PC-9 (cell line): ENCODE measurements at regions of chr18 and their contacts with region 1.

Region 1: GRCh38 chr18:67104700-67105284 is 411.7 kb downstream of the DSEL start:
- DNase-seq: peak; percentile 23 to 45
- H3K4me3 ChIP-seq: no peak overlapping the region
- H3K27ac ChIP-seq: no peak overlapping the region
- H3K4me1 ChIP-seq: no peaks in the 10 kb centered on the region
- H3K27me3 ChIP-seq: no peaks in the 10 kb centered on the region
- CTCF ChIP-seq: peak; percentile 82

Region 2: DNA sequence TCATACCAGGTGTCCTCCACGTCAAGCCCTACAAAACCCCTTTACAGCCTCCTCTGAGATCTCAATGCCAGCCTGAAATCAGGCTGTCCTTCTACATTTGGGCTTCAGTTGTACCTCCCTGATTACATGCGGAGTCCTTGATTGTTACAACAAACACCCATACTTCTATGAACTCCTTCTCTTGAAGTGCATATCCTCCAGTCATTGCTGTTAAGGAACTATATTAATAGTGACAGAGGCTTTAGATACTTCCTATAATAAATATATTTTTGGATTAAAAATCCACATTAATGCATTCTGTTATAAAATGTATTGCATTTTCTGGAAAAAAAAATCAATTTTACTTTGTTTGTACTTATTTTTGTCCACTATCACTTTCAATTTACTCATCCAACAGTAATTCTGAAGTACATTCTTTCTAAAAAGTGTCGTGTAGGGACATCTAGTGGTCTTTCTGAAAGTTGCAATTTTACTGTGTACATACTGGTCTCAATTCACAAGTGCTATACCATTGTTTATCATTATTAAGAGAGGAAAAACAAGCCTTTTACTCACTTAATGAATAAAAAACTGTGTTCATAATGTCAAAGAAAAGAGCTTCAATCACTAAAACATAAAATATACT is 95.3 kb after region 1 on chr18:
- CTCF ChIA-PET with region 1: no interaction called
- POLR2A ChIA-PET with region 1: no interaction called
- intact Hi-C with region 1: loop called (anchors 5 kb)
- DNase-seq: peak in 1 of 2 experiments; percentile 56
- H3K4me3 ChIP-seq: no peak overlapping the region
- H3K27ac ChIP-seq: no peak overlapping the region
- H3K4me1 ChIP-seq: no peaks in the 10 kb centered on the region
- H3K27me3 ChIP-seq: no peaks in the 10 kb centered on the region
- CTCF ChIP-seq: peak; percentile 79